Endothelial cell of umbilical vein (primary cell): ENCODE measurements at regions of chr1 and their contacts with region 1.

Region 1: GRCh38 chr1:7616076-7616832 is 154.8 kb upstream of the VAMP3 start:
- DNase-seq: peak; percentile 36
- H3K4me3 ChIP-seq: no peak overlapping the region
- H3K27ac ChIP-seq: no peak overlapping the region
- H3K4me1 ChIP-seq: no peaks in the 10 kb centered on the region
- H3K27me3 ChIP-seq: no peaks in the 10 kb centered on the region
- CTCF ChIP-seq: no peak
- POLR2A ChIP-seq: no peak

Region 2: DNA sequence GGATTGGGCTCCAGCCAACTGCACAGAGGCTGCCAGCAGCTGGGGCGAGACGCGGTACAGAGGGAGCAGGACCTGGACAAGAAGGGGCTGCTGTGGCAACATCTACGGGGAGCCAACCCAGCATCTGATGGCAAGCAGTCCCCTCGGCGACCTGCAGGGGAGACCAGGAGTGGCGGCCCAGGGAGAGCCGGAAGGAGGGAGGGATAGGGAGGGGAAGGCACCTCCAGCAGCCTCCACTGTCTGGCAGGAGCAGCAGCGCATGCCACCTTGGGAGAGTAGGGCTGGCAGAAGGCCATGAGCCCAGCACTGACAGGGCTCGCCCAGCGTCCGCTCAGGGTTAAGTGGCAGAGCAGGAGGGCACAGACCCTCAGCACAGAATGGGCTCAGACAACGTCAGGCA is 1453.5 kb before region 1 on chr1:
- CTCF ChIA-PET with region 1: no interaction called
- POLR2A ChIA-PET with region 1: no interaction called
- dilution Hi-C with region 1: no loop called
- intact Hi-C with region 1: loop called (anchors 5 kb)
- DNase-seq: no peak
- H3K4me3 ChIP-seq: no peak overlapping the region
- H3K27ac ChIP-seq: no peak overlapping the region
- H3K4me1 ChIP-seq: no peaks in the 10 kb centered on the region
- H3K27me3 ChIP-seq: no peaks in the 10 kb centered on the region
- CTCF ChIP-seq: no peak
- POLR2A ChIP-seq: no peak